ENCODE measurements at regions of chr3 and their contacts with region 1.

Region 1: GRCh38 chr3:45593708-45594609 is 592 bp upstream of the LIMD1 start:
- DNase-seq: no peak
- H3K4me3 ChIP-seq: peak overlapping the region; percentile 70
- CTCF ChIP-seq: no peak

Region 2: DNA sequence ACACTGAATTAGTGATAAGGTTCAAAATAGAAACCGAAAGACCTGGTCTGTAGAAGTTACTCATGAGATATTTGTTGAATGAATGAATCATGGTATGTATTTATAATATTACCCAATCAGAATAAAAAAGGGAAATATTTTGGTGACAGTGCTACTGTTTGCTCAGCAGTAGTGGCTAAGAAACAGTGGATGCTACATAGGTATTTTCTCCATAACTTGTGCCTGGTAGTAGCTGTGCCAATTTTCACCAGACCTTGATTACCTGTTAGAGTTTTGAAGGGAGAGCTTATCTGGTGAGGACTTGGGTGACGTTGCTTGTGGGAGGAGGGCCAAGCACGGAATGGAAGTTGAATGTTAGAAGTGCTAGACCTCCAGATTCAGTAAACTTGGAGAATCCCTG is 14.9 kb after region 1 on chr3:
- CTCF ChIA-PET with region 1: interaction called, 10 read pairs
- POLR2A ChIA-PET with region 1: interaction called, 3 read pairs
- DNase-seq: no peak
- H3K4me3 ChIP-seq: no peak overlapping the region
- CTCF ChIP-seq: no peak

Region 3: GRCh38 chr3:45665101-45665572 is 71.2 kb after region 1 on chr3:
- CTCF ChIA-PET with region 1: interaction called, 34 read pairs
- POLR2A ChIA-PET with region 1: interaction called, 13 read pairs
- DNase-seq: no peak
- H3K4me3 ChIP-seq: no peak overlapping the region
- CTCF ChIP-seq: peak; percentile 35

Region 4: DNA sequence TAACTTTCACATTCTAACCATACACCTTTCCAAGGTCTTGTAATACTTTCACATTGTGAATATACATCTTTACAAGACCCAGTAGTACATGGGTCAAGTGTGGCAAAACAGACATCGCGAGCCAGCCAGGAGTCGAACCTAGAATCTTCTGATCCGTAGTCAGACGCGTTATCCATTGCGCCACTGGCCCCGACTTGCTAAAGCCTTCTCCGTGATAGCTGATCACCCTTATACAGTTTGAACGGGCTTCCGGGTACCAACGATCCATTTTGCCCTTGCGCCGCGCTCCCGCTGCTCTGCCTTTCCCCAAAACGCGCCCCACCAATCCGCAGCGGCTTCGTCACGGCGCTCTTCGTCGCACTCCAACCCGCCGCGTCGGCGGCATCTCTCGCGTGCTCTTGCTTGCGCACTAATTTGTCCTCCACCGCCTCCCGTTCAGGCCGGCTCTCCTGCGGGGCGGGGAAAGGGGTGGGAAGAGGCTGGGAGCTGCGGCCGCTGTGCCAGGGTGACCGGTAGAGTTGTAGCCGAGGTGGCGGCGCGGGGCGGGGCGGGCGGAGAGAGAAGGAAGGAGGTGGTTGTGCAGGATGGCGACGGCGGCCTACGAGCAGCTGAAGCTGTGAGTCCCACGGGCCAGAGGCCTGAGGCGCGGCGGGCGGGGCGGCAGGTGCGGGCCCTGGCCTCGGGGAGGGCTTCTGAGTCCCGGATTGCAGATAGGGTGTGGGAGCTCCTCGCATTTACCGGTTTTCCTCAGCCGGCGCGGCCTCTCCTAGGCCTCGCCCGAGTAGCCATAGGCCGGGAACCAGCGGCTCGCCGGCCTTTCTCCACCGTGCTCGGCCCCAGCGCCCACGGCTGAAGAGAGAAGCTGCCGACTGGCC is 95.2 kb after region 1 on chr3 and contains the start of gene SACM1L:
- CTCF ChIA-PET with region 1: interaction called, 13 read pairs
- POLR2A ChIA-PET with region 1: no interaction called
- DNase-seq: peak; percentile 91
- H3K4me3 ChIP-seq: peak within 1 kb of the TSS; percentile 71
- CTCF ChIP-seq: no peak